Naive thymus-derived CD8-positive, alpha-beta T cell (primary cell): ENCODE measurements at regions of chr18 and their contacts with region 1.

Region 1: GRCh38 chr18:26226229-26227005 is at the start of gene TAF4B:
- DNase-seq: peak; percentile 89 to 94 (median 92)
- ATAC-seq: peak; percentile 88 to 91
- H3K4me3 Mint-ChIP-seq: peak within 1 kb of the TSS; percentile 88 to 98 (median 97)
- H3K27ac Mint-ChIP-seq: peak within 1 kb of the TSS; percentile 92 to 99 (median 97)
- H3K4me1 Mint-ChIP-seq: peaks cover 17 to 40% (median 37%) of the 10 kb centered on the region in 4 donors
- H3K27me3 Mint-ChIP-seq: no peaks in the 10 kb centered on the region
- polyA plus RNA-seq, gene TAF4B: 7.3 to 12.8 (median 8.2) TPM

Region 2: GRCh38 chr18:26090130-26091046 is 136.0 kb before region 1 on chr18 and contains the start of gene SS18:
- POLR2A ChIA-PET with region 1: interaction called, 14 read pairs
- DNase-seq: peak; percentile 76 to 95 (median 86)
- ATAC-seq: peak; percentile 78 to 83
- H3K4me3 Mint-ChIP-seq: peak within 1 kb of the TSS; percentile 94 to 98 (median 98)
- H3K27ac Mint-ChIP-seq: peak within 1 kb of the TSS; percentile 96 to 99 (median 97)
- H3K4me1 Mint-ChIP-seq: peaks cover 19 to 44% (median 31%) of the 10 kb centered on the region in 4 donors
- H3K27me3 Mint-ChIP-seq: no peaks in the 10 kb centered on the region
- polyA plus RNA-seq, gene SS18: 28.3 to 36.4 (median 29.8) TPM

Region 3: GRCh38 chr18:26215247-26215970 is 11.0 kb before region 1 on chr18:
- POLR2A ChIA-PET with region 1: interaction called, 36 read pairs
- DNase-seq: peak; percentile 15 to 90 (median 66)
- ATAC-seq: peak; percentile 99
- H3K4me3 Mint-ChIP-seq: peak overlapping the region; percentile 51 to 76 (median 66)
- H3K27ac Mint-ChIP-seq: peak overlapping the region; percentile 2 to 96 (median 89)
- H3K4me1 Mint-ChIP-seq: peaks cover 9 to 40% (median 30%) of the 10 kb centered on the region in 4 donors
- H3K27me3 Mint-ChIP-seq: no peaks in the 10 kb centered on the region